Panc1 (cell line): ENCODE measurements at regions of chr2 and their contacts with region 1.

Region 1: DNA sequence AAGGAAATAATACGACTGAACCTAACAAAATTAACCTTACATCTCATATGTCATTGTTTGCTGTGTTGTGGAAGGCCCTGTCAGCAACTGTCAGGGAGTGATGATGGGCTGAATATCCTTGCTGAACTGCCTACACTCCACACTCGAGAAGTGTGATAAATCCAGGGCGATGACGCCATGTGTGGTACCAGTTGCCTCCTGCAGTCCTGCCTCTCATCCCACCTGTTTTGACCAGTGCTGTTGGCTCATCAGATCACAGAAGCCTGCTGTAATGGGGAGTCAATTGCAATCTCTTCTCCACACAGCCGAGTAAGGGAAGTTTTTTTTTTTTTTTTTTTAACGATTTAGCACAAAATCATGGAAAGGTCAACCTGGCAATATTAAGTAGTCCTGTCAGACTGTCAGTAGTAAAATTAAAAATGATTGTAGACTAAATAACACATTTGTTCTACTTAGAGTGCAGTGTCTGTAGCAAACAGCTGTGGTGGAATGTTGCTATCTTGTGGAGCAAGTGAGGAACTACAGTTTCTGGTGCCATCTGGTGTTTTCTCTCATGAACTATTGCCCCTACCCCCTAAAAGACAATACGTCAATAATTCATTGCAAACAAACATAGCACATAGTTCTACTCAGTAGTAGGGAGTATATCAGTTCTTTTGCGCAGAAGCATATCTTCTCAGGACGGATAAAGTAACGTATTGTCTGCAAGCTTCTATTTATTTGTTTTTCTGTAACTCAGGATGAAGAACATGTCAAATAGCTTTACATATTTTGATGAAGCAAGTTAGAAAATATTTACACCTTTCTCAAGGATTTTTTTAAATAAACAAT is 347.6 kb downstream of the CTNNA2 start:
- DNase-seq: no peak
- ATAC-seq: no peak
- H3K4me3 ChIP-seq: no peak overlapping the region
- H3K27ac ChIP-seq: no peak overlapping the region
- H3K4me1 ChIP-seq: no peaks in the 10 kb centered on the region
- H3K27me3 ChIP-seq: no peaks in the 10 kb centered on the region
- CTCF ChIP-seq: peak; percentile 75

Region 2: DNA sequence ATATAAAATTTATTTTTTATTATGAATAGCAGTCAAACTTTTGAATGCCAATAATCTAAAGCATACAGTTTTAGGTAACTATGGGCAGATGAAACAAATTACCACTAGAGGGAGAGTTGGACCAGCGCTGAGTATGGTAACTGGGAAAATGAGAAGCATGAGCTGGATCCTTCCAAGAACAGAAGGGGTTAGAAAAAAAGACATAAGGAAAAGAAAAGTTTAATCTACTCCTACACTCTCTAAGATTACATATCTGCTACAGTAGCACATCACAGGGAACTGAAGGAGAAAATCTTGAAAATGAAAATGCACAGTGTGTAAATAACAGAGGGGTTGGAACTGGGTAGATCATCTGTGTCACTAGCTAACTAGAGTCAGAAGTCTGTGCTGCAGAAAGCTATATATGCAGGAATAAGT is 819.4 kb before region 1 on chr2:
- CTCF ChIA-PET with region 1: no interaction called
- POLR2A ChIA-PET with region 1: no interaction called
- in situ Hi-C with region 1: no loop called
- intact Hi-C with region 1: loop called (anchors 10 kb)
- DNase-seq: no peak
- ATAC-seq: peak; percentile 78
- H3K4me3 ChIP-seq: no peak overlapping the region
- H3K27ac ChIP-seq: no peak overlapping the region
- H3K4me1 ChIP-seq: no peaks in the 10 kb centered on the region
- H3K27me3 ChIP-seq: no peaks in the 10 kb centered on the region
- CTCF ChIP-seq: peak; percentile 67; the same call in 1 of the 2 replicates

Region 3: DNA sequence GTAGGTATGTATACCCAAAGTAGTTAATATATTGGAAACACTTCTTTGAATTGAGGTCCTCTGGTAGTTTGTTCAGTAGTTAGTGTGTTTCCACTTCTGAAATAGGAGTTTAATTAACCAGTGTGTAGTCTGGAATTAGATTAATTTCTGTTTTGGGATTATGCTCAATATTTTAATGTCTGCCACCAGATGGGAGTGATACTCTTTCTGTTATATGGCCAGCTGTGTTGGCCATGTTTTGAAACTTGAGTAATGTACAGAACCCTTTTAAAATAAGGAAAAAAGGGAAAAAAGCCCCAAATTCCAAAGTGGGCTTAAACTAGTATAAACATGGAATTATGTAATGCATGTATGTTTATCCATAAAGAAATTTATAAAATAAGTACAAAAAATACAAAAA is 199.9 kb before region 1 on chr2:
- CTCF ChIA-PET with region 1: no interaction called
- POLR2A ChIA-PET with region 1: no interaction called
- in situ Hi-C with region 1: no loop called
- intact Hi-C with region 1: loop called (anchors 10 kb)
- DNase-seq: no peak
- ATAC-seq: no peak
- H3K4me3 ChIP-seq: no peak overlapping the region
- H3K27ac ChIP-seq: no peak overlapping the region
- H3K4me1 ChIP-seq: no peaks in the 10 kb centered on the region
- H3K27me3 ChIP-seq: no peaks in the 10 kb centered on the region
- CTCF ChIP-seq: no peak

Region 4: GRCh38 chr2:79820281-79820680 is 40.2 kb before region 1 on chr2:
- CTCF ChIA-PET with region 1: no interaction called
- POLR2A ChIA-PET with region 1: no interaction called
- in situ Hi-C with region 1: no loop called
- intact Hi-C with region 1: no loop called
- DNase-seq: no peak
- ATAC-seq: no peak
- H3K4me3 ChIP-seq: no peak overlapping the region
- H3K27ac ChIP-seq: no peak overlapping the region
- H3K4me1 ChIP-seq: no peaks in the 10 kb centered on the region
- H3K27me3 ChIP-seq: no peaks in the 10 kb centered on the region
- CTCF ChIP-seq: no peak

Region 5: GRCh38 chr2:79910643-79911042 is 50.2 kb after region 1 on chr2:
- CTCF ChIA-PET with region 1: no interaction called
- POLR2A ChIA-PET with region 1: no interaction called
- in situ Hi-C with region 1: no loop called
- intact Hi-C with region 1: no loop called
- DNase-seq: no peak
- ATAC-seq: no peak
- H3K4me3 ChIP-seq: no peak overlapping the region
- H3K27ac ChIP-seq: no peak overlapping the region
- H3K4me1 ChIP-seq: no peaks in the 10 kb centered on the region
- H3K27me3 ChIP-seq: no peaks in the 10 kb centered on the region
- CTCF ChIP-seq: peak; percentile 26

Region 6: DNA sequence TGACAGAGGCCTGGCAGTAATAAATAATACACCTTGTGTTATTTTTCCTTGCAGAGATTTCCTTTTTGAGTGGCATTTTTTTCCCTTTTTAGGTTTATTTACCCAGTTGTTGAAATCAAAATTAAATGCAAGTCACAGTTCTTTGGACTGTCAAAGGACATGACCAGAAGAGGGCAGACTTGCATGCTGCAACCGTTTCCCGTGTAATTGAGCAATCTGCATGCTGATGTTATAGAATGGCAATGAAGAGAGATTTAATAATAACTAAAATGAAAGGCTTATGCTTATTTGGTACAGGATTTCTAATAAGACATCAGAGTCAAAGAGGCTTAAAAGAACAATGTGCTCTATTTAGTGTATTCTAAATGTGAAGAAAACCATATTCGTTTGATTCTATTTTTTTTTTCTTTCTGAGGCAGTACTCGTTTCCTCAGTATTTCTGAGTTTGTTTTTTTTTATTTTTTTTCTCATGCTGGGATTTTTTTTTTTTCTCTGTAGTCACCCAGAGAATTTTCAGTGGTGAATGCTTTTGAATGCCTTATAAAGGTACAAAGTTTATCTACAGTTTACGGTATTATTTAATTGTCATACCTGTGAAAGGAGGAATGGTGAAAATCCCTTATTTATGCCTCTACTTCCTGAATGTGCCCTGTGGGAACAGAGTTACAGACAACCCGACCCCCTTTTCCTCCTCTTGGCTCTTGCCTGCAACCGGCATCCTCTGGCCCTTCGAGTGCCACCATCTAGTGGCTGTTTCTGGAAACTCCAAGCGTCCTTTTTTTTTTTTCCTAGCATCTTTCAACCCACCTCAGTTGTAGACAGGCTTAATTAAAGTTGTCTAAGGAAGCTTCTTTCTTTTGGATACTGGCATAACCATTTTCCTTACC is 75.6 kb after region 1 on chr2:
- CTCF ChIA-PET with region 1: no interaction called
- POLR2A ChIA-PET with region 1: no interaction called
- in situ Hi-C with region 1: no loop called
- intact Hi-C with region 1: no loop called
- DNase-seq: peak; percentile 36
- ATAC-seq: peak; percentile 86
- H3K4me3 ChIP-seq: no peak overlapping the region
- H3K27ac ChIP-seq: no peak overlapping the region
- H3K4me1 ChIP-seq: no peaks in the 10 kb centered on the region; the same call in 1 of the 2 replicates
- H3K27me3 ChIP-seq: no peaks in the 10 kb centered on the region
- CTCF ChIP-seq: peak; percentile 88